Activated B cell treated with CpG ODN at 0.5 μM for 24 hours (primary cell): ENCODE measurements at regions of chr7 and their contacts with region 1.

Region 1: GRCh38 chr7:50142425-50143017 is 49.5 kb upstream of the ZPBP start:
- DNase-seq: no peak
- ATAC-seq: peak; percentile 62
- H3K4me3 Mint-ChIP-seq: peak overlapping the region; percentile 72
- H3K27ac Mint-ChIP-seq: peak overlapping the region; percentile 86
- H3K4me1 Mint-ChIP-seq: peaks cover 58% of the 10 kb centered on the region
- H3K27me3 Mint-ChIP-seq: no peaks in the 10 kb centered on the region
- CTCF ChIP-seq: no peak

Region 2: GRCh38 chr7:50166997-50167965 is 24.8 kb after region 1 on chr7:
- CTCF ChIA-PET with region 1: no interaction called
- POLR2A ChIA-PET with region 1: no interaction called
- intact Hi-C with region 1: no loop called
- DNase-seq: no peak
- ATAC-seq: peak; percentile 91
- H3K4me3 Mint-ChIP-seq: peak overlapping the region; percentile 20
- H3K27ac Mint-ChIP-seq: peak overlapping the region; percentile 69
- H3K4me1 Mint-ChIP-seq: peaks cover 52% of the 10 kb centered on the region
- H3K27me3 Mint-ChIP-seq: no peaks in the 10 kb centered on the region
- CTCF ChIP-seq: no peak

Region 3: DNA sequence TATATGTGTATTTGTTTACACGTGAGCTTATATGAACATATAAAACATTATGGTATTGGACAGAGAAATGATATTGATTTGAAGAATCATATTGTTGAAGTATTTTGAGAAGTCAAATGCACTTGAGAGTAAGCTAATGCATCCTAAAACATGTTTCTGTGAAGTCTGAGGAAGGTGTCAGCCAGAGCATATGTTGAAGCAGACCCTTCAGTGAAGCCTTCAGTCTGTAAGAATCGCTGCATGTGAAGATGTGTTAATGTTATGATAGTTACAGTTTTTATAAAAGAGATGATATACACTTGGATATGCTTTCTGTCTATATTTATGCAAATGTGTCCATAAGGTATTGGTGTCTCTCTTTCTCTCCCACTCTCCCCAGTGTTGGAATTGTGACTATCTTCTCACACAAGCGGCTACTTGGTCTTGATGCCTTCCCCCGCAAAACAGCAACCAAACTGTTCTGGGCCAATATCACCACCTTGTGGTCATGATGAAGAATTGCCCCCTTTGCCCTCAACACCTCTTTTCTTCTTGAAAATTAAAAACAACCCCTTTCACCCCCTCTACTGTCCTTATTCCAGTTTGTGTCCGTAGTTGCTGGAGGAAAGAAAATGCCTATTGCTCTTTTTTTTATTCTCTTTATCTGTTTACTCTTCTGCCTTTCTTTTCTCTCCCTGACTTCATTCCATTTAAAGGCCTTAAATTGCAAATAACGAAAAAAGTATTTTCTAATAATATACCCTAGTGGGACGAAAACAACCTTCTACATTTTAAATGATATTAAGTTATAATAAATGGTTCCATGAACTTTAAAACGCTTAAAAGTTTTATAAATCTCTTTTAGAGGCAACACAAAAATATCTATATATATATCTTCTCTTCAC is 226.9 kb after region 1 on chr7:
- CTCF ChIA-PET with region 1: interaction called, 24 read pairs
- POLR2A ChIA-PET with region 1: interaction called, 4 read pairs
- intact Hi-C with region 1: loop called (anchors 1 kb)
- DNase-seq: no peak
- ATAC-seq: peak; percentile 66
- H3K4me3 Mint-ChIP-seq: no peak overlapping the region
- H3K27ac Mint-ChIP-seq: peak overlapping the region; percentile 74
- H3K4me1 Mint-ChIP-seq: peaks cover 94% of the 10 kb centered on the region
- H3K27me3 Mint-ChIP-seq: no peaks in the 10 kb centered on the region
- CTCF ChIP-seq: peak; percentile 50

Region 4: DNA sequence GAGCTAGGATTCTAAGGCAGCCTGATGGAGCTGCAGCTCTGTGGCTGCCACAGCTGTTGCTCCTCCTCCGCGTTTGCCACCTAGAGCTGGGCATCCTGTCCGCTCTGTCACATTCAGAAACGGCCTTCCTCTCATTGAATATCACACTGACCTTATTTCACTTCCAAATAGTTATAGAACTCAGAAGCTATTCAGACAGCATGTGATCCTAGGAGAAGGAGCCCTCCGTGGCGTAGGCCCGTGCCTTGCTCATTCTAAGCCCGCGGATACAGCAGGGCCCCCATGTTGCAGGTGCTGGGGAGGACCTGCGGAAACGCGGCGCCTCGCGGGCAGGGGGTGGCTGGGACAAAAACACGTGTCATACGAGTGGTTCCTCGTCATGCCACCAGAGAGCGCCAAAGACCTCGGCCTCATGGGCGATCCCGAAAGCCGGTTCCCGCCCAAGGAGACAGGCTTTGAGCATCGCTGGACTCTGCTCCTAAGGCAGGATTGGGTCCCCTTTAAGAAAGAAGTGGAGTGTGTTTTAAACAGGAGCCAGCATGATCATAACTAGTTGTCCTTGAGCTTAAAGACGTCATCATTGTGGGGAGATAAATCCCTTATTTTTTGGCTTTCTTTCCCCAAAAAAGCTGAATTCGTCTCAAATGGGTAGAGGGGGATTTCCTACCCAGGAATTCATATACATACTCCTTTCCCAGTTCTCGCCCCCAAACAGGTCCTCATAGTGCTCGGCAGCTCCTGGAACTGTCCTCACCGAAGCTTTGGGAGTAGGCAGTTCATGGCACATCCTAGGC is 325.5 kb after region 1 on chr7:
- CTCF ChIA-PET with region 1: interaction called, 13 read pairs
- POLR2A ChIA-PET with region 1: no interaction called
- intact Hi-C with region 1: loop called (anchors 1 kb)
- DNase-seq: peak; percentile 61
- ATAC-seq: peak; percentile 93
- H3K4me3 Mint-ChIP-seq: peak overlapping the region; percentile 45
- H3K27ac Mint-ChIP-seq: no peak overlapping the region
- H3K4me1 Mint-ChIP-seq: peaks cover 8% of the 10 kb centered on the region
- H3K27me3 Mint-ChIP-seq: no peaks in the 10 kb centered on the region
- CTCF ChIP-seq: peak; percentile 43

Region 5: DNA sequence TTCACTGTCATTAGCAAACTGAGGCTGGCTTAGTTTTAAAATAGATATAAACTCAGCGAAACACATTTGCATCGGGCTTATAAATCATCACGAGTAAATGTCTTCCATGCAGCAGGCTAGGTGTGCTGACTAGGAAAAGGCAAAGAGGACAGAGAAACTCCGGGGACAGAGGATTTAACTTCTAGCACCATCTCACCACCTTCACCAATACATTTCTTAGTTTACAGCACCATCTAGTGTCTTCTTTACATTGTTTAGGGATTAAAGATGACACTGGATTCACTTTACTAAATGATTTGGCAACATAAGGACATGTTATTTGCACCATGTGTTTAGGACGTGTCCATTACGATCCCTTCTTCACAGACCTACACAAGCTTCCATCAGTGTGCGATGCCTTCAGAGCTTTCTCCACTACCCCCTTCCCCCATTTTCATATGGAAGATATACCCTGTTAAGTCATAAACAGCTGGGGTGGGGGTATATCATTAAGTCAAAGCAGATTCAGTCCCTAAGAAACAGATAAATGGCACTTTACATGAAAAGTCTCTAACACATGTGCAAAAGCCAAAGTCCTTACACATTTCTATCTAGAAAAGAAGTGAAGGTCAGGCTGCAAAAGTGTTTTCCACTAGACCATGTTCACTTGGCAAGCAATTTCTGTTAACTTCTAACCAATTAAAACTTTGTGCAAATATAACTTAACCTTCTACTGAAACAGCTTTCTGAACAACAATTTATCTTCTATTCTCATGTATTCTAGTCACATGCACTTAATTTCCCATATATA is 536.9 kb after region 1 on chr7:
- CTCF ChIA-PET with region 1: interaction called, 3 read pairs
- POLR2A ChIA-PET with region 1: no interaction called
- intact Hi-C with region 1: loop called (anchors 1 kb)
- DNase-seq: no peak
- ATAC-seq: peak; percentile 42
- H3K4me3 Mint-ChIP-seq: no peak overlapping the region
- H3K27ac Mint-ChIP-seq: no peak overlapping the region
- H3K4me1 Mint-ChIP-seq: peaks cover 6% of the 10 kb centered on the region
- H3K27me3 Mint-ChIP-seq: peaks cover 5% of the 10 kb centered on the region
- CTCF ChIP-seq: no peak